ENCODE measurements at regions of chr4 and their contacts with region 1.

Region 1: DNA sequence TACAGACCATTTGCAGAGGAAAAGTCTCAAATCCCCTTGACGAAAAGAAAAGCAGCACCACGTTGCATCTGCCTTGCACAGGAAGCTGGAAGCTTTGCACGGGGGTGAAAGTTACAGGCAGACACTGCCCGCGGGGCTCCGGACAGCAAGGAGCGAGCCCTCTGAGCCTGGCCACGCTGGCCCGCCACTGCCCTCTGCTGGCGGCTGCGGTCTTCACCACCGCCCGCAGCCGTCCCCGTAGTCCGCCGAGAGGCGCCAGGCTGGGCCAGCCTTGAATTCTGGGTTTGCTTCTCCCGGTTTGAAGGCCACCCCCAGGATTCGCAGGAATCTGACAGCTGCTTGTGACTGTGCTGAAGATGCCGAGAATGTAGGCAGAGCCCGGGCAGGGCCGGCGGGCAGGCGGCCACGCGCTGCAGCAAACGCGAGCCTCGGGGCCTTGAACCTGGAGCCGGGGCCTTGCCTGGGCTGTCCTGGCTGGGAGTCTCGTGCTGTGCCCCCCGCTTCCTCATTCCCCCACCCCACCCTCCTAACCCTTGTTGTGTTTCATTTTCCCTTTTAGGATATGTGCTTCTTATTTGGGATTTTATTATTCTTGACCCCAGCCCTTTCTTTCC is 49.2 kb downstream of the ENPP6 start:
- DNase-seq: peak; percentile 73 to 76
- H3K4me3 ChIP-seq: no peak overlapping the region
- H3K27ac ChIP-seq: no peak overlapping the region
- H3K4me1 ChIP-seq: peaks cover 0 to 8% of the 10 kb centered on the region in 2 donors
- H3K27me3 ChIP-seq: no peaks in the 10 kb centered on the region
- CTCF ChIP-seq: peak; percentile 61 to 99 (median 90)
- POLR2A ChIP-seq: no peak

Region 2: DNA sequence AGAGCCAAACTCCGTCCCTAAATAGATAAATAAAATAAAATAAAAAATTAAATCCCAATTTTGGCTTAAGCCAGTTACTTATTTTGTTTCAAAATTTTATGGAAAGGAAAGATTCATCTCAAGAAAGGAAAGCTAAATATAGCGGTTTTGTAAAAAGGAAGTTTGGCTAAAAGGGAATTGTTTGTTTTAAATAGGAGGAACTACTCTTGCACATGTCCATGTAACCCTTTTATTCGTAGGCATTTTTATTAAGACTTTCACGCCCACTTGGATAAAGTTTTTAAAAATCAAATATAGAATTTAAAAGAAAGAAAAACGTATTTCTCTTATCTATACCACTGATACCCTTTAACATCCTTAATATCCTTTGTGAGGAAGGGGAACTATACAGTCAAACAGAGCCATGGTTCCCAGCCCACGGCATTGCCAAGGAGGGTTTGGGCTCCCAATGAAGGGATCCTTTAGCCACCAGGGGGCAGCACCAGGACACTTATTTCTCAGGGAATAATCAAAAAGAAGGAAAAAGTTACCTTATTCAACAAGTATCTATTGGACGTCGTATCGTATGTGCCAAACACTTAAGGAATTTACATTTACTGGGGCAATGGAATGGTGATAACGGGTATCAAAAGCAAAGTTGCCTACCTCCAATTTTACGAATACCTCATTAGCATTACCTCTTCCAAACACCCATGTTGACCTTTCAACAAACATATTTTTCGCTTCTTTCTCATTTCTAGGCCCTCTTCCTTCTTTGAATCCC is 696.4 kb before region 1 on chr4:
- intact Hi-C with region 1: loop called (anchors 5 kb)
- DNase-seq: peak; percentile 89 to 93
- H3K4me3 ChIP-seq: no peak overlapping the region
- H3K27ac ChIP-seq: no peak overlapping the region
- H3K4me1 ChIP-seq: no peaks in the 10 kb centered on the region
- H3K27me3 ChIP-seq: no peaks in the 10 kb centered on the region
- CTCF ChIP-seq: peak; percentile 71 to 80 (median 77)
- POLR2A ChIP-seq: no peak

Region 3: DNA sequence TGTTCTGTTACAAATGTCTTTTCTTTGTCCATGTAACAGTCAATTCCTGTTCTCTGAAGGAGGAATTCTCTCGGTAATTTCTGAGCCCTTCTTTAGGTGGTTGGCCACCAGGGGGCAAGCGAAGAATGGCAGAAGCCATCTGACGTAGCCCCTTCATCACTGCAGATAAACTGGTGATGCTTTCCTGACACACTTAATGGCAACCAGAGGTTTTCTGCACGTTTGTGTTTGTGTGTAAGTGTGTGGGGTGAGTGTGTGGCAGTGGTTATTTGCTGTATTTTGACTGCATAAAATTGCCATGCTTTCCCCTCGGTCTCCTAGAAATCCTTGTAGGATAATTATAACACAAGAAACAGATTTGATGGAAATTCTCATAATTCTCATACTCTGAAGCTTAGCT is 328.2 kb before region 1 on chr4:
- intact Hi-C with region 1: loop called (anchors 5 kb)
- DNase-seq: peak; percentile 80 to 86
- H3K4me3 ChIP-seq: no peak overlapping the region
- H3K27ac ChIP-seq: no peak overlapping the region
- H3K4me1 ChIP-seq: no peaks in the 10 kb centered on the region
- H3K27me3 ChIP-seq: no peaks in the 10 kb centered on the region
- CTCF ChIP-seq: peak; percentile 41 to 80 (median 73)
- POLR2A ChIP-seq: no peak